ENCODE measurements at regions of chr9 and their contacts with region 1.

Region 1: DNA sequence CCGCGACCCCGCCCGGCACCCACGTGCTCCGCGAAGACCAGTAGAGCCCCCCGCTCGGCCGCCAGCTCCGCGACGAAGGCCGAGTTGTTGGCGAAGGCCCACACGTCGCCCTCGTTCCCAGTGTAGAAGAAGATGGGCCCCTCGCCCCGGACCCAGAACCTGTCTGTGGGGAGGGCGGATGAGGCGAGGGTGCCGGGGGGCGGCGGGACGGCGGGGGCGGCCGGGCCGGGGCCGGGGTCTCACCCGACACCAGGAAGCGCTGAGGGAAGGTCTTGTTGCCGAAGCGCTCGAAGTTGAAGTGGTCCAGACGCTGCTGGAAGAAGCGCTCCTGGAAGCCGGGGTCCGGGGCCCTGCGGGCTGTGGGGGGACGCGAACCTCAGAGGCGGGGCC is 318 bp downstream of the DPP7 start:
- DNase-seq: no peak
- H3K4me3 ChIP-seq: peak overlapping the region; percentile 50
- H3K4me3 Mint-ChIP-seq: peak overlapping the region; percentile 24 to 64 (median 51)
- H3K27ac ChIP-seq: peak overlapping the region; percentile 38
- H3K27ac Mint-ChIP-seq: peak overlapping the region in 1 of 8 donors; percentile 29
- H3K4me1 ChIP-seq: peaks cover 10% of the 10 kb centered on the region
- H3K4me1 Mint-ChIP-seq: peaks cover 0 to 12% (median 3%) of the 10 kb centered on the region in 3 donors
- H3K27me3 ChIP-seq: no peaks in the 10 kb centered on the region
- H3K27me3 Mint-ChIP-seq: peaks cover 0 to 1% of the 10 kb centered on the region in 2 donors

Region 2: GRCh38 chr9:136978073-136978864 is 135.9 kb before region 1 on chr9:
- CTCF ChIA-PET with region 1: no interaction called
- POLR2A ChIA-PET with region 1: no interaction called
- DNase-seq: peak; percentile 68 to 85 (median 79)
- H3K4me3 ChIP-seq: no peak overlapping the region
- H3K4me3 Mint-ChIP-seq: peak overlapping the region in 4 of 7 donors; percentile 52 to 66 (median 61)
- H3K27ac ChIP-seq: no peak overlapping the region
- H3K27ac Mint-ChIP-seq: no peak overlapping the region
- H3K4me1 ChIP-seq: peaks cover 26% of the 10 kb centered on the region
- H3K4me1 Mint-ChIP-seq: peaks cover 21 to 47% (median 24%) of the 10 kb centered on the region in 3 donors
- H3K27me3 ChIP-seq: no peaks in the 10 kb centered on the region
- H3K27me3 Mint-ChIP-seq: peaks cover 0 to 5% of the 10 kb centered on the region in 2 donors

Region 3: DNA sequence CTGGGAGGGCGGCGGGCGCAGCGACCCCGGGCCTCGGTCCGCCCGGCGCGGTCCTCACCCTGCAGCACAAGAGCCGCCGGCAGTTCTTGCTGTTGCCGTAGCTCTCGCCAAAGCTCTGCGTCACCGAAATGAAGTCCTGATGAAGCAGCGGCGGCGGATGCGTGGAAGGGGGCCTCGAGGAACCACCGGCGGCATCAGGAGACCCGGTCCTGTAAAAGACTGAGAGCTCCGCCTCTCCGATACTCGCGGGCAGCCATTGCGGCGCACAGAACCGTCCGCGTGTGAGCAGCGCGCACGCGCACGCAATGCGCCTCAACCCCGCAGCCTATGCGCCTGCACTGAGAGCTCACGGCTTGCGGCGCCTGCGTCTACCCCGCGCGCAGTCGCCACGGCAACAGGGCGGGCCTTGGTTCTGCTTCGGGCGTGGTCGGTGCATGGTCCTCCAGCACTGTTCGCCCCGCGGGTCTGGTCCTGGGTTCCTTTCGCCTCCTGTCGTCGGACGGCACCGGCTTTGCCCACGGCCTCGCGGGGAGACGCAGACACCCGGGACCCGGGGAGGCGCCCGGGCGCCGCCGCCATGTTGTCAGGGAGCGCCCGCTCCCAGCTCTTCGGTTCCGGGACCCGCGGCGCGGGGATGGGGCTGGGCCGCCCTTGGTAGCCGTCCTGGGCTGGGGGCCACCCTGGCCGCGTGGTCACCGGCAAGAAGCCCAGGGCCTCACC is 15.4 kb after region 1 on chr9:
- CTCF ChIA-PET with region 1: interaction called, 7 read pairs
- POLR2A ChIA-PET with region 1: interaction called, 10 read pairs
- DNase-seq: peak; percentile 78 to 92 (median 89)
- H3K4me3 ChIP-seq: peak overlapping the region; percentile 78
- H3K4me3 Mint-ChIP-seq: peak overlapping the region; percentile 79 to 99 (median 88)
- H3K27ac ChIP-seq: peak overlapping the region; percentile 81
- H3K27ac Mint-ChIP-seq: peak overlapping the region; percentile 68 to 98 (median 88)
- H3K4me1 ChIP-seq: peaks cover 25% of the 10 kb centered on the region
- H3K4me1 Mint-ChIP-seq: peaks cover 27 to 36% (median 30%) of the 10 kb centered on the region in 3 donors
- H3K27me3 ChIP-seq: no peaks in the 10 kb centered on the region
- H3K27me3 Mint-ChIP-seq: peaks cover 11 to 20% of the 10 kb centered on the region in 2 donors

Region 4: GRCh38 chr9:137150617-137151457 is 36.6 kb after region 1 on chr9:
- CTCF ChIA-PET with region 1: no interaction called
- POLR2A ChIA-PET with region 1: no interaction called
- DNase-seq: peak in 1 of 5 donors; percentile 17
- H3K4me3 ChIP-seq: no peak overlapping the region
- H3K4me3 Mint-ChIP-seq: peak overlapping the region in 1 of 7 donors; percentile 56
- H3K27ac ChIP-seq: no peak overlapping the region
- H3K27ac Mint-ChIP-seq: peak overlapping the region in 1 of 8 donors; percentile 65
- H3K4me1 ChIP-seq: no peaks in the 10 kb centered on the region
- H3K4me1 Mint-ChIP-seq: peaks cover 0 to 1% (median 0%) of the 10 kb centered on the region in 3 donors
- H3K27me3 ChIP-seq: no peaks in the 10 kb centered on the region
- H3K27me3 Mint-ChIP-seq: peaks cover 7 to 15% of the 10 kb centered on the region in 2 donors

Region 5: GRCh38 chr9:137182836-137183235 is 68.6 kb after region 1 on chr9:
- CTCF ChIA-PET with region 1: no interaction called
- POLR2A ChIA-PET with region 1: no interaction called
- DNase-seq: no peak
- H3K4me3 ChIP-seq: no peak overlapping the region
- H3K4me3 Mint-ChIP-seq: no peak overlapping the region
- H3K27ac ChIP-seq: no peak overlapping the region
- H3K27ac Mint-ChIP-seq: peak overlapping the region in 1 of 8 donors; percentile 48
- H3K4me1 ChIP-seq: peaks cover 20% of the 10 kb centered on the region
- H3K4me1 Mint-ChIP-seq: peaks cover 18 to 32% (median 20%) of the 10 kb centered on the region in 3 donors
- H3K27me3 ChIP-seq: no peaks in the 10 kb centered on the region
- H3K27me3 Mint-ChIP-seq: no peaks in the 10 kb centered on the region

Region 6: DNA sequence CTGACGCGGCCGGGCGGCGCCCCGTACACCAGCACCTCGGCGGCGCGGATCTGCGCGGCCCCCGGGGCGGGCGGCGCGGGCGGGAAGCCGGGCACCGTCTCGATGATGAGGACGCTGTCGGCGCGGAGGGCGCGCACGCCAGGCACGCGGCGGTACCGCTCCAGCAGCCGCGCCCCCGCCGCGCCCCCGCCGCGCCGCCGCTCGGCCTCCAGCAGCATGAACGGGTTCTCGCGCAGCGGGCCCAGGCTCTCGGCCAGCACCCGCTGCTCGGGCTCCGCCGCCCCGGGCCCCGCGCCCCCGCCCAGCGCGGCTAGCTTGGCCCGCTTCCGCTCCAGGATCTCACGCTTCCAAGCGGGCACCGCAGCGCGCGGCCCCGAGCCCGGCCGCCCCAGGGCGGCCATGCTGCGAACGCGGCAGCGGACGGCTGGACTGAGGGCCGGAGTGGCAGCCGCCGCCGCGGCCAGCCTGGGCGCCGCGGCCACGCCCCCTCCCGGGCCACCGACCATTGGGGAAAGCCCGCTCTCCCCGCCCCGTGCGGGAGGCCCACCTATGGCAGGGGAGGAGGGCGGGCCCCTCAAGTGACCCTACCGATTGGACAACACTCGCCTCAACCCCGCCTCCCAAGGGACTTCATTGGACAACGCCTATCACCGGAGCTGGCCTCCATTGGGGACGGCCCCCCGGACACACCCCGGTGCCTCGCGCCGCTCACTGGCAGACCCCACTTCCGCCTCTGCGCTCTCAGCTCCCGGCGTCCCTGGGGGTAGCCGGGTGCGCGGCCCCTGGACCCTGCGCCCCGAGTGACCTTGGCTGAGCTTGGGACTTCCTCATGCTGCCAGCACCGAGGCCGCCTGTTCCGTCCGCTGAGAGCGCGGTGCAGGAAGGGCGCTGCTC is 86.3 kb after region 1 on chr9 and contains the start of gene TPRN:
- CTCF ChIA-PET with region 1: no interaction called
- POLR2A ChIA-PET with region 1: interaction called, 10 read pairs
- DNase-seq: peak; percentile 95 to 99 (median 98)
- H3K4me3 ChIP-seq: peak within 1 kb of the TSS; percentile 78
- H3K4me3 Mint-ChIP-seq: peak within 1 kb of the TSS; percentile 79 to 98 (median 83)
- H3K27ac ChIP-seq: peak within 1 kb of the TSS; percentile 74
- H3K27ac Mint-ChIP-seq: peak within 1 kb of the TSS; percentile 66 to 97 (median 78)
- H3K4me1 ChIP-seq: peaks cover 30% of the 10 kb centered on the region
- H3K4me1 Mint-ChIP-seq: peaks cover 20 to 35% (median 21%) of the 10 kb centered on the region in 3 donors
- H3K27me3 ChIP-seq: no peaks in the 10 kb centered on the region
- H3K27me3 Mint-ChIP-seq: no peaks in the 10 kb centered on the region
- total RNA-seq, gene TPRN: 14.1 to 15.1 TPM